Panc1 (cell line): ENCODE measurements at regions of chr7 and their contacts with region 1.

Region 1: GRCh38 chr7:143299840-143300239 is 11.7 kb downstream of the CASP2 start:
- DNase-seq: no peak
- ATAC-seq: peak; percentile 87
- H3K4me3 ChIP-seq: no peak overlapping the region
- H3K27ac ChIP-seq: no peak overlapping the region
- H3K4me1 ChIP-seq: no peaks in the 10 kb centered on the region
- H3K27me3 ChIP-seq: no peaks in the 10 kb centered on the region
- CTCF ChIP-seq: peak; percentile 84

Region 2: DNA sequence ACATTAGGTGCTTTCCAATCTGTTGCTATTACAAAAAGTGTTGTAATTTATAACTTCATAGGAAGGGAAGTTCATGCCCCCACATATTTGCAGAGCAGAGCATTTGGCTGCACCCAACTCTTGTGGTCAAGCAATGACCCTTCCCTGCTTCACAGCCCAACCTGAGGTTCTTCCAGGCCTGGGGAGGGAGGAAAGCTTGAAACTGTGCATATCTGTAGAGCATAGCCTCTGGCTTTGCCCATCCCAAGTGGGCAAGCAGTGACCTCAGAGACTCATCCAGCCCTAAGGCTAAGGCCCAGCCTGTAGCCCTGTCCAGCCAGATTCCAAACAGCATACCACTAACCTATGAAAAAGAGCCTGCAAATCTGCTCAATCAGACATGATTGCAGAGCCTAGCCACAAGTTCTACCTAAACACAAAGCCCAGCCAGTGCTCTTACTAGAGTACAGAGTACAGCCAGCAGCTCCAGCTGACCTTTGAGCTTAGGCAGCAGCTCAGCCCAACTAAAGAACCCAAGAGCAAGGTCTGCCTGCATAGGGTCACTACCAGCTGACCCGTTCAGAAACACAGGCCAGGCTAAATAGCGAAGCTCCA is 51.0 kb before region 1 on chr7:
- CTCF ChIA-PET with region 1: no interaction called
- POLR2A ChIA-PET with region 1: no interaction called
- in situ Hi-C with region 1: no loop called
- intact Hi-C with region 1: no loop called
- DNase-seq: no peak
- ATAC-seq: no peak
- H3K4me3 ChIP-seq: no peak overlapping the region
- H3K27ac ChIP-seq: no peak overlapping the region
- H3K4me1 ChIP-seq: no peaks in the 10 kb centered on the region
- H3K27me3 ChIP-seq: no peaks in the 10 kb centered on the region
- CTCF ChIP-seq: no peak

Region 3: DNA sequence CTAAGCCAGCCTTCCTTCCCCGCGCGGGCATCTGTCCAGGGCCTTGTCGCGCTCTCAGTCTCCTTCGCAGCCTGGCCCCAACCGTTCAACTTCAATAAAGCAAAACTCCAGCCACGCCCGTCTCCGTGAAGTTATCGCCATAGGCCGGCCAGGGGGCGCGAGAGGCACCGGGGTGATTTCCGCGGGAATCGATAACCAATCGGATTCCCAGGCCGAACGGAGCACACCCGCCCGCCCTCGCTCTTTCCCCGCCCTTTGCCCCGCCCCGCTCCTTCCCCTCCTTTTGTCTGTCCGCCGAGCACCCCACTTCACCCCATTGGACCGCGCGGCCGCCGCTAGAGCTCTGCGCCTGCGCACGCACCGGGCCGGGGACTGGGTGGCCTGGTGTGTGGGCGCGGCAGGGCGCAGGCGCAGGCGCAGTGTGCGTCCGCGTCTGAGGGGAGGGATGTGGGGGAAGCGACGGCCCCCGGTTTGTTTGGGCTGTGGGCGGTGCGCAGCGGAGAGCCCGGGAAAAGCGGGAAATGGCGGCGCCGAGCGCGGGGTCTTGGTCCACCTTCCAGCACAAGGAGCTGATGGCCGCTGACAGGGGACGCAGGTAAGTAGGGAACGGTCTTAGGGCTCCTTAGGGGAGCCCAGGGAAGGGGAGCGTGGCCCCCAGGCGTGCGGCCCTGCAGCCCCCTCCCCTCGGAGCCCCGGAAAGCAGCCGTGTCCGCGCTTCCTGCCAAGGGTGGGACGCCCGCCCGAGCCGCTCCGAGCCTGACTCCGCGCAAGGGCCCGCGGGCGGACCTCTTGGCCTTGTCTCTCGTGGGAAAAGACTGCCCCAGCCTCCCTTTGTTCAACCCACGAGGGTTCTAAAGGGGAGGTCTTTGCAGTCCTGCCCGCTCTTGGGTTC is 11.7 kb before region 1 on chr7 and contains the start of gene CASP2:
- CTCF ChIA-PET with region 1: no interaction called
- POLR2A ChIA-PET with region 1: interaction called, 10 read pairs
- in situ Hi-C with region 1: no loop called
- intact Hi-C with region 1: no loop called
- DNase-seq: peak; percentile 72
- ATAC-seq: peak; percentile 96
- H3K4me3 ChIP-seq: peak within 1 kb of the TSS; percentile 97 to 98
- H3K27ac ChIP-seq: peak within 1 kb of the TSS; percentile 96
- H3K4me1 ChIP-seq: peaks cover 24% of the 10 kb centered on the region
- H3K27me3 ChIP-seq: no peaks in the 10 kb centered on the region
- CTCF ChIP-seq: no peak; the same call in 1 of the 2 replicates
- total RNA-seq, gene CASP2: 47.4 TPM